ENCODE measurements at regions of chr11 and their contacts with region 1.

Region 1: DNA sequence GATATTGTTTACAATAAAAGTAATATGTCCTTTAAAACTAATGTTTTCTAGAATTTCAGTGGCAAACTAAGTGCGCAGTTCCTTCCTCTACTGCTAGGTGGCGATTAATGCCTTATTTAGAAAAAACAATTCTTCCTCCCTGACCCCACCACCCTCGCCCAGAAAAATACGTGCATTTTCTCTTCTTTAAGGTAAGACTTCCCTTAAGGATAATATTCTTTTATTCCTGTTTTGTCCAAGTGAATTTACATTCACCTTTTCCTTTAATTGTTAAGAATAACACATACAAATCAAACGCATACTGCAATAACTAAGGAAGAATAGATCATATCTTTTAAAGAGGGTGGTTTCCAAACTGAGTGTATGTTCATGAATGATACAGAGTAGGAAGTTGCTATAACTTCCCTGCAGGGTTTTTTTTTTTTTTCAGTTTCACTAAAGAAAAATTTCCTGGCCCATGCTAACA is 17.0 kb upstream of the PSMA1 start:
- DNase-seq: no peak
- ATAC-seq: peak; percentile 69
- H3K4me3 ChIP-seq: no peak overlapping the region
- H3K27ac ChIP-seq: no peak overlapping the region
- H3K4me1 ChIP-seq: peaks cover 0 to 8% of the 10 kb centered on the region in 2 experiments; a peak in 2 of 4 replicates
- H3K27me3 ChIP-seq: no peaks in the 10 kb centered on the region
- CTCF ChIP-seq: peak; percentile 57 to 84 (median 70); a peak in 5 of 6 replicates
- POLR2A ChIP-seq: no peak
- RAD21 ChIP-seq: peak; percentile 70

Region 2: GRCh38 chr11:14499554-14500180 is 37.5 kb before region 1 on chr11 and contains the start of gene COPB1:
- CTCF ChIA-PET with region 1: no interaction called
- POLR2A ChIA-PET with region 1: no interaction called
- RAD21 ChIA-PET with region 1: no interaction called
- intact Hi-C with region 1: no loop called
- DNase-seq: peak; percentile 88
- ATAC-seq: peak; percentile 90
- H3K4me3 ChIP-seq: peak within 1 kb of the TSS; percentile 64 to 89
- H3K27ac ChIP-seq: peak within 1 kb of the TSS; percentile 58
- H3K4me1 ChIP-seq: peaks cover 7 to 14% of the 10 kb centered on the region in 2 experiments; a peak in 3 of 4 replicates
- H3K27me3 ChIP-seq: no peaks in the 10 kb centered on the region
- CTCF ChIP-seq: no peak
- POLR2A ChIP-seq: peak; percentile 82
- RAD21 ChIP-seq: no peak
- total RNA-seq, gene COPB1: 95.5 TPM

Region 3: DNA sequence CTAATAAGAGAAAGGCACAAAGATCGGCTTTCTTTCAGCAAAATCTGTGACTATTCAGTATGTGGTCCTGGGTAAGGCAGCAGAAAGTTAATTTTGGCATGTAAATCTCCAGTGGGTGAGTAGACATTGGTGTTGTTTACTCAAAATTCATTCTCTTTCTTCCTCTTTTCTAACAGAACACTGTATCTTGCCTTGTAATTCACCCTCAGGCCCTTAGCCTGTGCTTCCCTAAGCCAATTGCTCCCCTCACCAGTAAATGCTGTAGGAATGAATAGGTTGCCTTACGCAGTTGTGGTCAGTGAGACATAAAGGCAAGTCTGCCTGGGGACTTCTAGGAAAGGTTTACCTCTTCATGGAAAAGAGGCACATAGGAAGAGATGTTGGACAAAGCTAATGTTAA is 56.5 kb after region 1 on chr11:
- CTCF ChIA-PET with region 1: no interaction called
- POLR2A ChIA-PET with region 1: no interaction called
- RAD21 ChIA-PET with region 1: no interaction called
- intact Hi-C with region 1: loop called (anchors 10 kb)
- DNase-seq: no peak
- ATAC-seq: no peak
- H3K4me3 ChIP-seq: no peak overlapping the region
- H3K27ac ChIP-seq: no peak overlapping the region
- H3K4me1 ChIP-seq: no peaks in the 10 kb centered on the region
- H3K27me3 ChIP-seq: no peaks in the 10 kb centered on the region
- CTCF ChIP-seq: no peak
- POLR2A ChIP-seq: no peak
- RAD21 ChIP-seq: no peak

Region 4: GRCh38 chr11:14764579-14765527 is 227.7 kb after region 1 on chr11:
- CTCF ChIA-PET with region 1: no interaction called
- POLR2A ChIA-PET with region 1: no interaction called
- RAD21 ChIA-PET with region 1: no interaction called
- intact Hi-C with region 1: loop called (anchors 10 kb)
- DNase-seq: no peak
- ATAC-seq: no peak
- H3K4me3 ChIP-seq: no peak overlapping the region
- H3K27ac ChIP-seq: no peak overlapping the region
- H3K4me1 ChIP-seq: no peaks in the 10 kb centered on the region
- H3K27me3 ChIP-seq: no peaks in the 10 kb centered on the region
- CTCF ChIP-seq: no peak
- POLR2A ChIP-seq: no peak
- RAD21 ChIP-seq: no peak